Posterior vena cava (tissue), 2 donors: ENCODE measurements at regions of chr13 and their contacts with region 1.

Region 1: DNA sequence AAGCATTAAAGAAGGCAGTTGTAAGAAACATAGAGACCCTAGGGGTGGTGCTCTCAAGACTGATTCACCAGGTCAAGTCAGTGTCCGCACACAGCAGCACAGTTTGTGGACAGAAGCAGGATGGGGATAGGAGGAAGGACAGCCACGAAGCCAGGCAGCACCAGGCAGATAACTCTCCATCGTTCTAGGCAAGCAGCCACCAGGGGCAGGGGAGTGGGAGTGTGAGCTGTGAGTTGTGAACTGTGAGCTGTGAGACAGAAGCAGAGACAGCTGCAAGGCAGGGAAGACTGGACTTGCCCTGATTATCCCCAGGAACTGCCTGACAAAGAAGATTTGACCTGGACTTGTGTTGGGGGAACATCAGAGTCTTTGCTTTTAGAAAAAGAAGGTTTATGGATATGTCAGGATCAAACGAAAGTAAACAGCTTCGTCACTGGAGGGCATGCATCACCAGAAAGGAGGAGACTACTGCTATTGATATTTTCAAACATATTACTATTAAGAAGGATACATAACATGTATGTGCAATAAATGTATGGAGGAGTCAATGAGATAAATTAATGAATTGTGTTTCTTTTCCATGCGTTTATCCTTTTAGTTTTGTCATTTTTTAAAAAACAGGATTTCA is 286.1 kb downstream of the IRS2 start:
- DNase-seq: no peak

Region 2: DNA sequence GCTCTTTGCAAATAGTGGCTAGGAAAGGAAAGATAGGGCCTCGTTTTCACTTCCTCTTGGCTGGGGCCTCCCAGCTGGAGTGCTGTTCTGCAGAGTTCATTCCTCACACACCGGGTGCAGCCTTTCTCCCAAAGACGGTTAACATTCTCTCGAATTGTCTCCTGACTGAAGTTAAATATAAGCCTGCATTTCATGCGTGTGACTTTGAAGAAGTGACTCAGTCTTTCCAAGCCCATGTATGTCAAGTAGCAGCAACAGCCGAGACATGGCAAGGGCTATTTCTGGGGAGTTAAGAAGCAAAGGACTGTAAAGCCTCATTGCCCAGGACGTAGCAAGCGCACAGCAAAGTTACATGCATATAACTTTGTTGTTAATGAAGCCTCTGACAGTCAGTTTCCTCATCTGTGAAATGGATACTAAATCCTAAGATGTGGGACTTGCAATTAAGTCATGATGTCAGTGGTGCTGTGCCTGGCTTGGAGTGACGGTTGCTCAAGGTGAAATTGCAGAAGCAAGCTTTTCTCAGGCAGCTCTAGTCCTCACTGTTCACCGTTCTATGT is 368.5 kb before region 1 on chr13:
- intact Hi-C with region 1: no loop called
- DNase-seq: no peak

Region 3: DNA sequence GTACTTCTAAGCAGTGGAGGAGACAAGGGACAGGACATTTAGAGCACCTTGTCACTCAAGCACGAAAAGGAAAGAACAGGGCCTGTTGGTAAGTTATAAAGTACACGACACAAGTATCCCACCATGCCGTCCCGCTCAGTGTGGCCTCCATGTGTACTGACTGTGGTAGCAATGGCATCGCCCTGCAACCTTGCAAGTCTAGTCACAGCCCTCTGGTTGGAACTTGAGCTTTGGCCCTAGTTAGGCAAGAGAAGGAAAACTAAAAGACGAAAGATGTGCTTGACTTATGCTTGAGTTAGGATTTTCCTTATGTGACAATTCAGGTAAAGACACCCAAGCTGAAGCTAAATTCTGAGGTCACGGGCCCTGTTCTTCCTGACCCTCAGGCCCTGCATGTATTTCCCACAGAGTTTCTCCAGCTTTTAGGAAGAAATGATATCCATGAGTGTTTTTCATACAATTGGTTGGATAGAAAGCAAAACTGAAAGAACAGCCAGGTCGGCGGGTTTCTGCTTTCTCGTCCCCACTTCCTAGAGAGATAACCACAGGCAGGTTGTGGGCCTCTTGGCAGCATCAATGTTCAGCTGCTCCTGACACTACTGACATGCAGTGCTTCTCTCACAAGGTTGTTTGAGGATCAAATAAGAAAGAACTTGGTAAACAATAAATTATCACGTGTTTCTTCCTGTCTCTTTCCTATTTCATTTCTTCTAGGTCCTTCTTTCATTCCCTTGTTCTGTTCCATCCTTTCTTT is 69.9 kb after region 1 on chr13:
- intact Hi-C with region 1: loop called in 1 of 2 experiments (anchors 5 kb)
- DNase-seq: no peak

Region 4: DNA sequence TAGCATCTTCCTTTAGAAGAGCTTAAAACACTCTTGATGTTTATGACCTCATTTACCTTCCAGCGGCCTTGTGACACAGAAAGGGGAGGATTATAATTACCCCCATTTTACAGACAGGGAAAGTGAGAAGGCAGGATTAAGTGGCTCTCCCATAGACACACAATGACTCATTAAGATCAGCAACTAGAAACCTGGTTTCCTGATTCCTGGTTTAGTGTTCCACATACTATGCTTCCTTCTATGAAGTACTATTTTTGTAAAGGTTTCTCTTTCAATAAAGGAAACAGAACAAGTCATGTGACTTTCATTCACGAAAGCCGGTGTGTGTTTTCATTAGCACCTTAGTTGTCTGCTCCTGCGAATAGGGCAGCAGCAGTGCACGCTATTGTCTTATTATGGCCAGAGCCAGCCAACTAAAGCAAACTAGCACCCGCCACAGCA is 277.9 kb after region 1 on chr13:
- intact Hi-C with region 1: no loop called
- DNase-seq: no peak

Region 5: GRCh38 chr13:109790951-109791605 is 290.8 kb after region 1 on chr13:
- intact Hi-C with region 1: no loop called
- DNase-seq: no peak